ENCODE measurements at regions of chr4 and their contacts with region 1.

Region 1: DNA sequence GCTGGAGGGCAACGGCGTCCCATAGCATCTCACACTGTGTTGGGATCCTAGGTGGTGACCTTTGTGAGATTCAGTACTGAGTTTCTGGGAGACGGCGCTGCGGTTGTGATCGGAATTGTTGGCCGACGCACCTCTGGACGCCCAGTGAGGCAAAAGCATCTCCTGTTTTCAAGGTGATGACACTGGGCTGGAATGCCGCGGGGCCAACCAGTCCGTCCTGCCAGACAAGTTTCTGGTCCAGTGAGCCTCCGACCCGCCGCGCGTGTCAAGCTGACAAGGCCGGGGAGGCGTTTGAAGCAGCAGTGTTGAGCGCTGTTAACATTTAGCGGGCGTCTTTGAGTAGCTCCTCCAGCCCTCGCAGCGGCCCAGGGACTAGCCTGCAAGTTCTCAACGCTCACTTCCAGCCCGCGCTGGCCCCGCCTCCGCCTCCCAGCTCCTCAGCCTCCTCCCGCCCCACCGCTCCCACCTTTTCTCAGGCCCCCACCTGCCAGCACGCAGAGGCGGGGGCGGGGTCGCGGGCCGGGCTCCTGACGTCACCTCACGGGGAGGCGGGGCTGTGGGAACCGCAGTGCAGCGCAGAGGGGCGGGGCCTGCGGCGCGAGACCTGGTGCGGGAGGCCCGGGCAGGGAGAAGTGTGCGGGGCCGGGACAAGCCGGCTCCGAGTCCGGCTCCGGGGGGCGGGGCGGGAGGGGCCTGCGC is 476 bp upstream of the CDS1 start:
- DNase-seq: peak; percentile 94
- H3K4me3 ChIP-seq: peak overlapping the region; percentile 86; the same call in 1 of the 2 replicates
- H3K27ac ChIP-seq: peak overlapping the region; percentile 94
- H3K4me1 ChIP-seq: peaks cover 32% of the 10 kb centered on the region
- H3K27me3 ChIP-seq: no peaks in the 10 kb centered on the region
- CTCF ChIP-seq: no peak

Region 2: DNA sequence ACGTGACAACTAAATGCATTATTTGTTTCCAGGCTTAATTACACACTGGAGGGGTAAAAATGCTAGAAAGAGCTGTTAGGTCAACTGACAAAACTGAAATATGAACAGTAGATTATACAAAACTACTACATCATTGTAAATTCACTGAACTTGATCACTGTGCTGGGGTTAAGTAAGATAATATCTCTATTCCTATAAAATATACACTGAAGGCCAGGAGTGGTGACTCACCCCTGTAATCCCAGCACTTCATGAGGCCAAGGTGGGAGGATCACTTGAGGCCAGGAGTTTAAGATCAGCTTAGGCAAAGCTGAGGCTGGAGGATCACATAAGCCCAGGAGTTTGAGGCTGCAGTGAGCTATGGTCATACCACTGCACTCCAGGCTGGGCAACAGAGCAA is 51.6 kb before region 1 on chr4:
- CTCF ChIA-PET with region 1: no interaction called
- POLR2A ChIA-PET with region 1: interaction called, 5 read pairs
- intact Hi-C with region 1: loop called (anchors 1 kb)
- DNase-seq: peak; percentile 20 to 86
- H3K4me3 ChIP-seq: no peak overlapping the region
- H3K27ac ChIP-seq: peak overlapping the region; percentile 88
- H3K4me1 ChIP-seq: peaks cover 40% of the 10 kb centered on the region
- H3K27me3 ChIP-seq: no peaks in the 10 kb centered on the region
- CTCF ChIP-seq: no peak

Region 3: DNA sequence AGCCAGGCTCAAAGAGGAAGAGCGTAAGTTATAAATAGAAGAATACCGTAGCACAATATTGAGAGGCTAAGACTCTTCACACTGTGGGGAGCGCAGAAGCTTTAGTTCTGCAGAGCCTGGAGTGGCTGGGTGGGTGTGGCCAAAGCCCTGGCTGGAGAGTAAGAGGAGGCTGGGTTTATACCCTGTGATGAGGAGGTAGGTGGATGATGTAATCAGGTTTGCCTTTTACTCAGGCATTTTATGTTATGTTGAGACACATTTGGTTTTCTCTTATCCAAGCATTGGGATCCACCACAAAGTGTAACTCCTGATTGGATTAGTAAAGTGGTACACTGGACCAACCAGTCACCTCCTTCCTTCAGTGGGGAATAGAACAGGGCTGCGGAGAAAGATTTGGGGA is 14.4 kb after region 1 on chr4:
- CTCF ChIA-PET with region 1: interaction called, 5 read pairs
- POLR2A ChIA-PET with region 1: interaction called, 4 read pairs
- intact Hi-C with region 1: loop called (anchors 1 kb)
- DNase-seq: peak in 1 of 2 experiments; percentile 65
- H3K4me3 ChIP-seq: 0 out of 2 replicates have a peak overlapping the region, but pooled peaks have one; percentile 2
- H3K27ac ChIP-seq: peak overlapping the region; percentile 97
- H3K4me1 ChIP-seq: peaks cover 59% of the 10 kb centered on the region
- H3K27me3 ChIP-seq: no peaks in the 10 kb centered on the region
- CTCF ChIP-seq: no peak

Region 4: DNA sequence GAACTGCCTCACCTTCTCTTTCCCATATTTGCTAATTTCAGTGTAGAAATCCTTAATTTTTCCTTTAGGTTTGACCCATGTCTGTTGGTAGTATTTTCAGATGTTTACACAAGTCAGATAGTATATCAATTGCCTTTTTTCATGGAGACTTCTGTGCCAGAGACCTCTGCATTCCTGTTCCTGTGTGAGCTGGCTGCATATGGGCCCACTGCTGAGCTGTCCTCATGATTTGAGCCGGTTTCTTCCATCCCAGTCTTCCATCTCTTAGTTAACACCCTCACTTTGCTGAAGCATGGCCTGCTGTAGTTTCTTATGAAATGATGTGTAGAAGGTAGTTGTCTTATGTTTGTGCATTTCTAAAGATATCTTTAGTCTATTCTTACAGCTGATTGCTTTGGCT is 40.5 kb after region 1 on chr4:
- CTCF ChIA-PET with region 1: no interaction called
- POLR2A ChIA-PET with region 1: no interaction called
- intact Hi-C with region 1: no loop called
- DNase-seq: no peak
- H3K4me3 ChIP-seq: no peak overlapping the region
- H3K27ac ChIP-seq: no peak overlapping the region
- H3K4me1 ChIP-seq: no peaks in the 10 kb centered on the region
- H3K27me3 ChIP-seq: no peaks in the 10 kb centered on the region
- CTCF ChIP-seq: no peak

Region 5: DNA sequence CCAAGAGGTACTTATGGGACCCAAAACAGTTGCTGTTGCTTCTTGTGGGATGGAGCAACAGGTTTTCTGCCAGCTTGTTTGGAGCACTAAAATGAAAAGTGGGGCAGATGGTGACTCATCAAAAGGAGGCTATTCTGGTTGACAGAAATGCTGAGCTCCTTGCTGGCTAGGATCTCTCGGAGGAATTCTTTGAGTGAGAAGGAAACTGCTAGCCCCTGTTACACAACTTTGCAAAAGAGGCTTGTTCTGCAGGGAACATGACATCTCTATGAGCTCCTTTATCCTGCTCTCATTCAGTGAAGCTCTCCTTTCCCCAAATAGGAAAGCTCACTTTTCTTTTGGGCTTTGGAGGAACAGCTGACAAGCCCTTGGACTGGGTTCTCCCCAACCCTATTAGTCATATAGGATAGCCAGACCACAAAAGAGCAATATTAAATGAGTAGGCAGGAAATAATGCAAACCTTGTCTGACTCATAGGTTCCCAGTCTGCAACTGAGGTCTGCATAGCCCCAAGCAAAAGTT is 108.8 kb after region 1 on chr4:
- CTCF ChIA-PET with region 1: no interaction called
- POLR2A ChIA-PET with region 1: no interaction called
- intact Hi-C with region 1: loop called (anchors 1 kb)
- DNase-seq: peak; percentile 39 to 89
- H3K4me3 ChIP-seq: peak overlapping the region; percentile 16; the same call in 1 of the 2 replicates
- H3K27ac ChIP-seq: peak overlapping the region; percentile 80
- H3K4me1 ChIP-seq: peaks cover 35% of the 10 kb centered on the region
- H3K27me3 ChIP-seq: no peaks in the 10 kb centered on the region
- CTCF ChIP-seq: no peak

Region 6: GRCh38 chr4:84952009-84952408 is 369.6 kb after region 1 on chr4:
- CTCF ChIA-PET with region 1: no interaction called
- POLR2A ChIA-PET with region 1: interaction called, 5 read pairs
- intact Hi-C with region 1: loop called (anchors 10 kb)
- DNase-seq: peak; percentile 26 to 86
- H3K4me3 ChIP-seq: no peak overlapping the region
- H3K27ac ChIP-seq: peak overlapping the region; percentile 80
- H3K4me1 ChIP-seq: peaks cover 25% of the 10 kb centered on the region
- H3K27me3 ChIP-seq: no peaks in the 10 kb centered on the region
- CTCF ChIP-seq: no peak

Region 7: GRCh38 chr4:84966383-84967242 is 384.2 kb after region 1 on chr4 and contains the start of gene WDFY3:
- CTCF ChIA-PET with region 1: no interaction called
- POLR2A ChIA-PET with region 1: no interaction called
- intact Hi-C with region 1: loop called (anchors 5 kb)
- DNase-seq: peak; percentile 65
- H3K4me3 ChIP-seq: peak within 1 kb of the TSS; percentile 72
- H3K27ac ChIP-seq: 0 out of 2 replicates have a peak within 1 kb of the TSS, but pooled peaks have one; percentile 43
- H3K4me1 ChIP-seq: peaks cover 25% of the 10 kb centered on the region
- H3K27me3 ChIP-seq: no peaks in the 10 kb centered on the region
- CTCF ChIP-seq: no peak
- total RNA-seq, gene WDFY3: 35.4 and 46.3 TPM in 2 replicates

Region 8: GRCh38 chr4:85039526-85039925 is 457.1 kb after region 1 on chr4:
- CTCF ChIA-PET with region 1: no interaction called
- POLR2A ChIA-PET with region 1: no interaction called
- intact Hi-C with region 1: no loop called
- DNase-seq: peak in 1 of 2 experiments; percentile 59
- H3K4me3 ChIP-seq: no peak overlapping the region
- H3K27ac ChIP-seq: peak overlapping the region; percentile 84
- H3K4me1 ChIP-seq: peaks cover 19% of the 10 kb centered on the region
- H3K27me3 ChIP-seq: no peaks in the 10 kb centered on the region
- CTCF ChIP-seq: no peak